Cardiac septum (tissue), 1 donor: ENCODE measurements at regions of chr20 and their contacts with region 1.

Region 1: DNA sequence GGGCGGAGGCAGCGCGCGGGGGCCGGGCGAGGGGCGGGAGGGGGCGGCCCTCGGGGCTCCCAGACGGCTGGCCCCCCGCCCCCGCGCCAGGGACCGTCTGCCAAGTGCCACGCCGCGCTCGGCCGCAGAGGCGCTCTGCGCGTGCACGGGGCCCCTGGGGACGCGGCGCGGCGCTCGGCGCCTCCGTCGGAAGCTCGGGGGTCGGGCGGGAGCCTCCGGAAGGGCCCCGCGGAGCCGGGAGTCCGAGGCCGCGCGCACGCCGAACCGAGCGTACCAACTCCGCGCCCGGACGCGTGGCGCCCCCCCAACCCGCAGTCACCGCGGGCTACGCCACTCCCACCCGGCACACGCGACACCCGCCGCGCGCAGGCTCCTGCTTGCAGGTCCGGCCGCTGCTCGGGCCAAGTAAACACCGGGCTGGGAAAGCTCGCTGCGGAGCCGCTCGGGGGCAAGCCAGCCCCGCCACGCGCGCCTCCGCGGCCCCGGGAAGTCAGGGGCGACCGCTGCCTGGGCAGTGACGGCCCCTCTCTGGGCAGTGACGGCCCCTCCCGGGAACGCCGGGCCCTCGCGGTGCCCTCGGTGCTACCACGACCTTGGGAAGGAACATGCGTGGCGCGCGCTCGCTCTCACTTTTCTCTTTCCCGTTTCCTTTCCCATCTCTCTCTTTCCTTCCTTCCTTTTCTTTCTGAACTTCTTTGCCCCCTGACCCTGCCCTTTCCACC is 384 bp upstream of the PREX1 start:
- DNase-seq: peak; percentile 92

Region 2: DNA sequence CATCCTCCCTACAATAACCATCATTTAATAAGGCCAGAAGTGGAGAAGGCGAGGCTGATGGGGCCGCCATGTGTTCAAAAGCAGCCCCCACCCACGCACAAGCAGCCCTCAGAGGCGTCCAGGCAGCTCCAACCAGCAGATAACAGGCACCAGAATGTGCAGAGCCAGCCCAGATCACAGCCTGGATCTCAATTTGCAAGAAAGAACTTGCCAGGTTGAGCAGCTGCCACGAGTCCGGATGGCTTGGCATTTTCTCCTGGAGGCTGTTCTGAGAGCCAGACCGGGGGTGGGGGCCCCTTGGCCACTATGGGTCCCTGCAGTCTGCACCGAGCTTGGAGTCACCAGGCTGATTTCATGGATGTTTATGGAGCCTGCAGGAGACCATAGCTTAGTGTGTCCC is 338.5 kb before region 1 on chr20:
- intact Hi-C with region 1: no loop called
- DNase-seq: no peak

Region 3: DNA sequence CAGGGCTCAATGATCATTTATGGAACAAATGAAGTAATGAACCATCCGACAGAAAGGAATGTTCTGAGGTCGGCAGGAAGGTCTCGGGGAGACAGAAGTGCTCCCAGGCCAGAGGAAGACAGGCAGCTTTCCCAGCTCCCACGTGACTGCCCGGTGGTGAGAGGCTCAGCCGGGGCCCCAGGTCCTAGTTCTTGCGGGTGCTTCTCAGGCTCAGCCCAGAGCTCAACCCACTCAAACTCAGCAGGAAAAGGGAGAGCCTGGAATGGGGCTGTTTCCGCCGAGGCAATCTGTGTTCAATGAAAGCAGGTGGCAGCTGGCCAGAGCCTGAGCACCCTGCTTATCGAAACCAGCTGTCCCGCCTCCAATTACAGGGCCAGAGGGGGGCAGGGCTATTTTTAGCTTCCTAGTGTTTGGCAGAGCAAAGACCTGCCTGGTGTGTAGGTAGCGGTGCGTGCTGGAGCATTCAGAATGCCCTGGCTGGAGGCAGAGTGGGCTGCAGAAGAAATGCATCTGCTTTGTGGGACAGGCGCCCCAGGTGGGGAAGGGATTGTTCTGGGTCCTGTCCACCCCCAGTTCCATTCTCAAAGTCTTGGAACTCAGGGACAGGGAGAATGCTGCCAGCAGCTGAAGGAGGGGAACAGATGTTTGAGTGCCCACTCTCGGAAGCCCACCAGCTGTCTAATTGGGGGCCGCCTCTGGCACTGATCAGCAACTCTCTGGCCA is 145.5 kb before region 1 on chr20:
- intact Hi-C with region 1: loop called (anchors 5 kb)
- DNase-seq: peak; percentile 86

Region 4: DNA sequence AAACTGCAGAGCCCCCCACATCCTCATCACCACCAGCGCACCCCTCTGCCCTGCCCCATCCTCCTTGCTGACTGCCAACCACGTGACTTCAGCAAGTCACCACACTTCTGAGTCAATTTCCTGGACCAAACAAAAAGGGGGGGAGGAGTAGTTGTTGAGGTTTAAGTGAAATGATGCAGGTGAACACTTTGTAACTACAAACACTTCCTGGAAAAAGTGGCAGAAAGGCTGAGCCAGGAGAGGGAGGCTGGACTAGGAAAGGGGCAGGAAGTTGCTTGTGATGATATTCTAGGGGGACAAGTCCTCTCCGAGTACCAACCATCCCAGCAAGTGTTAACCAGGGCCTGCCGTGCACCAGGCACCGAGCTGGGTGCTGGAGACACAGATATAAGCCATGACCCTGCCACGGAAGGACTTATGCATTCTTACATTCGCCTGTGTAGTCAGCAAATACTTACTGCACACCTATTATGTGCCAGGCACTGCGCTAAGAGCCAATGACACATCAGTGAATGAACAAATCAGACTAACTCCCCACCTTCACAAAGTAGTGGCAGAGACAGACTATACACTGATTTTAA is 67.7 kb before region 1 on chr20:
- intact Hi-C with region 1: loop called (anchors 5 kb)
- DNase-seq: peak; percentile 85

Region 5: GRCh38 chr20:48904365-48905296 is 76.4 kb after region 1 on chr20:
- intact Hi-C with region 1: loop called (anchors 5 kb)
- DNase-seq: no peak